ENCODE measurements at regions of chr14 and their contacts with region 1.

Region 1: DNA sequence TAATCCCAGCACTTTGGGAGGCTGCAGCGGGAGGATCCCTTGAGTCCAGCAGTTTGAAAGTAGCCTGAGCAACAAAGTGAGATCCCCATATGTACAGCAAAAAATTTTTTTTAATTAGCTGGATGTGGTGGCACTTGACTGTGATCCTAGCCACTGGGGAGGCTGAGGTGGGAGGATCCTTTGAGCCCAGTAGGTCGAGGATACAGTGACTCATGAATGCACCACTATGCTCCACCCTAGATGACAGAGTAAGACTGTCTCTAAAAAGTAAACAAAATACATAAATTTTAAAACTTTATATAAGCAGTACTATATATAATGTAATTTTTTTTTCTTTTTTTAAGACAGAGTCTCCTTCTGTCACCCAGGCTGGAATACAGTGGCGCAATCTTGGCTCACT is 115.4 kb downstream of the ESR2 start:
- DNase-seq: no peak
- CTCF ChIP-seq: no peak

Region 2: GRCh38 chr14:64191756-64192155 is 12.9 kb after region 1 on chr14:
- CTCF ChIA-PET with region 1: interaction called, 10 read pairs
- POLR2A ChIA-PET with region 1: no interaction called
- DNase-seq: no peak
- CTCF ChIP-seq: no peak